CD4-positive, alpha-beta memory T cell (primary cell): ENCODE measurements at regions of chr5 and their contacts with region 1.

Region 1: GRCh38 chr5:56608217-56608925 is 207.0 kb upstream of the MAP3K1 start:
- DNase-seq: no peak
- H3K4me3 ChIP-seq: no peak overlapping the region
- H3K4me3 Mint-ChIP-seq: no peak overlapping the region
- H3K27ac ChIP-seq: no peak overlapping the region
- H3K27ac Mint-ChIP-seq: peak overlapping the region in 3 of 7 donors; percentile 29 to 67 (median 53)
- H3K4me1 ChIP-seq: peaks cover 61% of the 10 kb centered on the region
- H3K4me1 Mint-ChIP-seq: peaks cover 45 to 84% (median 68%) of the 10 kb centered on the region in 4 donors
- H3K27me3 ChIP-seq: no peaks in the 10 kb centered on the region
- H3K27me3 Mint-ChIP-seq: no peaks in the 10 kb centered on the region

Region 2: GRCh38 chr5:56596155-56596554 is 12.2 kb before region 1 on chr5:
- CTCF ChIA-PET with region 1: interaction called, 13 read pairs
- POLR2A ChIA-PET with region 1: interaction called, 5 read pairs
- intact Hi-C with region 1: no loop called
- DNase-seq: no peak
- H3K4me3 ChIP-seq: no peak overlapping the region
- H3K4me3 Mint-ChIP-seq: no peak overlapping the region
- H3K27ac ChIP-seq: no peak overlapping the region
- H3K27ac Mint-ChIP-seq: no peak overlapping the region
- H3K4me1 ChIP-seq: peaks cover 12% of the 10 kb centered on the region
- H3K4me1 Mint-ChIP-seq: peaks cover 28 to 52% (median 41%) of the 10 kb centered on the region in 4 donors
- H3K27me3 ChIP-seq: no peaks in the 10 kb centered on the region
- H3K27me3 Mint-ChIP-seq: no peaks in the 10 kb centered on the region